ENCODE measurements at regions of chr6 and their contacts with region 1.

Region 1: DNA sequence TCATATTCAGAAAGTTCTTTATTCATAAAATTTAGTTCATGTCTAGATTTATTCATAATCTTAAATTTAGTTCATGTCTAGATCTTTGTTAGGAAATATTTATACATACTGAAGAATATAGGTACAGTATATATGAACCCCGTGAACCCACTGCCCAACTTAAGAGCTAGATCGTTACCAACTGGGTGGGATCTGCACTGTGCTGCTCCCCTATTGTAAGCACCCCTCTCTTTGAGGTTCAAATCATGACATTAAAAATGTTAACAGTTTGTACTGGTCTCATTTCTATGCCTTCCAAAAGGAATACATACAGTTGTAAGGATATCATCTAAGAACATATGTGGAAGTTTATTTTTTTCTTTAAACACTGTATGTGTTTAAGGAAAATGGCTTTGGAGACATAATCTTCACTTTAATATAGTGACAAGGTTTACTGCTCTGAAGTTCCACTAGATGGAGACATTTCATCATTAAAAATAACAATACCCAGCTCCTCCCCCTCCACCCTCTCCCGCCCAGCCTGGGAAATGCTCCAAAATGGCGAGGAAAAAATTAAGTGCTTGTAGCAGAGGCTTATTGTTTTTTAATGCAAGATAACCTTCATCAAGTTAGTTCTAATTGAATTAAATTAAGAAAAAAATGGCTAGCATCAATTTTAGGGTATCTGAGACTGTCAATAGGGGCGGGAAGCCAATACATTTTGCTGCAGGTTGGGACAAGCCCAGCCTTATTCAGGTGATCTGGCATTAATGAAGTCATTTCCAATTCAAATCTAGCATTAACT is 104.1 kb upstream of the TRAF3IP2 start:
- DNase-seq: peak; percentile 33
- ATAC-seq: peak; percentile 97
- H3K4me3 ChIP-seq: no peak overlapping the region
- H3K27ac ChIP-seq: peak overlapping the region; percentile 13; the same call in 1 of the 2 replicates
- H3K4me1 ChIP-seq: peaks cover 5% of the 10 kb centered on the region; the same call in 1 of the 2 replicates
- H3K27me3 ChIP-seq: no peaks in the 10 kb centered on the region
- CTCF ChIP-seq: peak; percentile 45 to 76 (median 62); a peak in 4 of 6 replicates
- EP300 ChIP-seq: no peak
- POLR2A ChIP-seq: no peak
- RAD21 ChIP-seq: peak; percentile 91

Region 2: GRCh38 chr6:111696814-111697213 is 13.0 kb before region 1 on chr6:
- CTCF ChIA-PET with region 1: interaction called, 16 read pairs
- POLR2A ChIA-PET with region 1: no interaction called
- RAD21 ChIA-PET with region 1: interaction called, 5 read pairs
- SMC1A ChIA-PET with region 1: interaction called, 12 read pairs
- in situ Hi-C with region 1: no loop called
- intact Hi-C with region 1: no loop called
- DNase-seq: no peak
- ATAC-seq: no peak
- H3K4me3 ChIP-seq: no peak overlapping the region
- H3K27ac ChIP-seq: no peak overlapping the region
- H3K4me1 ChIP-seq: no peaks in the 10 kb centered on the region
- H3K27me3 ChIP-seq: no peaks in the 10 kb centered on the region
- CTCF ChIP-seq: no peak
- EP300 ChIP-seq: no peak
- POLR2A ChIP-seq: no peak
- RAD21 ChIP-seq: no peak

Region 3: DNA sequence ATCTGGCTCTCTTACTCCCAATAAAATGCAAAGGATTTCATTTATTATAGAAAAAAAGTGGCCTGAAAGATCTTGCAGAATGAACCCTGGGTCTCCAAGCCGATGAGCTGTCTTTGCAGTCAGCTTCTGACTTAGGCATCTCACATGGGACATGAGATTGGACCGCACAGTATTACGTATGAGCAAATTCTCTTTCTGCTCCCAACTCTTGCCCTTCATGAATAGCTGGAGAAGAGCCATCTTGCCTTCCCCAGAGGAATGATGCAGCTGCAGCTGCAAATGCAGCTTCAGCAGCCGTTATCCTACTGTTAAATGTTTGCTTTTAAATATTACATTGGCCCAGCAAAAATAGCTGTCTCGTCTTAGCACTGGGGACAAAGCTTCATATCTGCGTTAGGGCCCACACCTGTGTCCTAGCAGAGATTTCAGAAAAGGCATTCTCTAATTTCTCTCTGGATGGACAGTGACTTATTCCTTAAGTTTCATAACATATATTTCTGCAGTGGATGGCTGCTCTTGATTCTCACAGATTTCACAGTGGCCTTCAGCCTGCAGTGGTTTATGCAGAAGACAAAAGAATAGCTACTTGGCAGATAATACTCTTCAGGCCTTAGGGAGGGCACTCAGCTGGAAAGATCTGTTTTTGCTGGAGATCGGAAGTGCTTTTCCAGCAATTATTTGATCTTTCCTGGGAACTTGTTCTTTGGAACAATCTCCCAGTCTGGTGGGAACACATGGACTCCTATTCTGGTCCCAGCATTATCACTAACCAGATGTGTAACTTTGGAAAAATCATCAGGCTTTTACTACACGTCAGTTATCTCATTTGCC is 34.3 kb after region 1 on chr6:
- CTCF ChIA-PET with region 1: interaction called, 7 read pairs
- POLR2A ChIA-PET with region 1: no interaction called
- RAD21 ChIA-PET with region 1: interaction called, 8 read pairs
- SMC1A ChIA-PET with region 1: interaction called, 11 read pairs
- in situ Hi-C with region 1: no loop called
- intact Hi-C with region 1: no loop called
- DNase-seq: no peak
- ATAC-seq: no peak
- H3K4me3 ChIP-seq: no peak overlapping the region
- H3K27ac ChIP-seq: no peak overlapping the region
- H3K4me1 ChIP-seq: peaks cover 58% of the 10 kb centered on the region
- H3K27me3 ChIP-seq: no peaks in the 10 kb centered on the region
- CTCF ChIP-seq: no peak
- EP300 ChIP-seq: no peak
- POLR2A ChIP-seq: no peak
- RAD21 ChIP-seq: no peak

Region 4: GRCh38 chr6:111777357-111777756 is 67.5 kb after region 1 on chr6:
- CTCF ChIA-PET with region 1: interaction called, 12 read pairs
- POLR2A ChIA-PET with region 1: no interaction called
- RAD21 ChIA-PET with region 1: no interaction called
- SMC1A ChIA-PET with region 1: interaction called, 5 read pairs
- in situ Hi-C with region 1: no loop called
- intact Hi-C with region 1: loop called (anchors 1 kb)
- DNase-seq: no peak
- ATAC-seq: peak; percentile 82
- H3K4me3 ChIP-seq: no peak overlapping the region
- H3K27ac ChIP-seq: peak overlapping the region; percentile 61
- H3K4me1 ChIP-seq: peaks cover 22% of the 10 kb centered on the region
- H3K27me3 ChIP-seq: no peaks in the 10 kb centered on the region
- CTCF ChIP-seq: peak; percentile 39 to 50 (median 43); a peak in 4 of 6 replicates
- EP300 ChIP-seq: no peak
- POLR2A ChIP-seq: no peak
- RAD21 ChIP-seq: peak; percentile 72

Region 5: DNA sequence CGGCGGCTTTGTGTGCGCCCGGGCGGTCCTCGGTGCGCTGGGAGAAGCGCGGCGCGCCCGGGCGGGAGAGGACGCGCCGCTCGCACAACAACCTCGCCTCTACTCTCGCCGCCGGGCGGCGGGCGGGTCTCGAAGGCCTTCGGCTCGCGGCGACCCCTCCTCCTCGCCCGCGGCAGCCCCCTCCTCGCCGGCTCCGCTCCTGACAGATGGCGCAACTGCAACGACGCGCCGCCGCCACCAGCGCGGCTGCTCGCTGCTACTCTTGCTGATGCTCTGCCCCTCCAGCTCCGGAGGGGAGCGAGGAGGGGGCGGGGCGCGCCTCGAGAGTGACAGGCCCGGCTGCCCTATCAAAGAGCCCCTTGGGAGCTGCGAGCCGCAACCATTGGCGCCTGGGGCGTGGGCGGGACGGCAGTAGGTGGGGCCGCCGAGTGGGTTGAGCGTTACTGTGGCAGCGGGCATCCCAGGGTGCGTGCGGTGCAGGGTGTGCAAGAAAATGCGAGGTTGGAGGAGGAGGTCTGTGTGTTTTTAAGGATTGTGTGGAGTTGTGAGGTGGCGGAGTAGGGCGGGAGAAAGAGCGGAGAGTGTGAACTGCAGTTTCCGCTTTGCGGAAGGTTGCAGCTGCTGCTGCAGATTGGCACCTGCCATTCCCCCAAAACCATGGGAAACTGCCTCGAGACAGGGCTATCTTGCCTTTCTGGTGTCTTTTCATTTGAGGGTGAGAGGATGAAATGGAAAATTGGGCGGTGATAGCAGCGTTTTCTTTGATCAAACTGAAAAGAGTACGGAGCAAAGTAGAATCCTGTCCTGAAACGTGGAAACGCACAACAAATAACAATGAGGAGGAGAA is 163.6 kb after region 1 on chr6 and contains the start of gene FYN:
- CTCF ChIA-PET with region 1: interaction called, 4 read pairs
- POLR2A ChIA-PET with region 1: no interaction called
- RAD21 ChIA-PET with region 1: interaction called, 8 read pairs
- SMC1A ChIA-PET with region 1: interaction called, 16 read pairs
- in situ Hi-C with region 1: no loop called
- intact Hi-C with region 1: no loop called
- DNase-seq: peak; percentile 76
- ATAC-seq: peak; percentile 92
- H3K4me3 ChIP-seq: peak within 1 kb of the TSS; percentile 98
- H3K27ac ChIP-seq: peak within 1 kb of the TSS; percentile 76
- H3K4me1 ChIP-seq: peaks cover 5% of the 10 kb centered on the region
- H3K27me3 ChIP-seq: no peaks in the 10 kb centered on the region
- CTCF ChIP-seq: peak; percentile 28 to 65 (median 30); a peak in 5 of 6 replicates
- EP300 ChIP-seq: no peak
- POLR2A ChIP-seq: peak; percentile 95
- RAD21 ChIP-seq: peak; percentile 48
- polyA plus RNA-seq, gene FYN: 51.4 to 55.1 TPM

Region 6: DNA sequence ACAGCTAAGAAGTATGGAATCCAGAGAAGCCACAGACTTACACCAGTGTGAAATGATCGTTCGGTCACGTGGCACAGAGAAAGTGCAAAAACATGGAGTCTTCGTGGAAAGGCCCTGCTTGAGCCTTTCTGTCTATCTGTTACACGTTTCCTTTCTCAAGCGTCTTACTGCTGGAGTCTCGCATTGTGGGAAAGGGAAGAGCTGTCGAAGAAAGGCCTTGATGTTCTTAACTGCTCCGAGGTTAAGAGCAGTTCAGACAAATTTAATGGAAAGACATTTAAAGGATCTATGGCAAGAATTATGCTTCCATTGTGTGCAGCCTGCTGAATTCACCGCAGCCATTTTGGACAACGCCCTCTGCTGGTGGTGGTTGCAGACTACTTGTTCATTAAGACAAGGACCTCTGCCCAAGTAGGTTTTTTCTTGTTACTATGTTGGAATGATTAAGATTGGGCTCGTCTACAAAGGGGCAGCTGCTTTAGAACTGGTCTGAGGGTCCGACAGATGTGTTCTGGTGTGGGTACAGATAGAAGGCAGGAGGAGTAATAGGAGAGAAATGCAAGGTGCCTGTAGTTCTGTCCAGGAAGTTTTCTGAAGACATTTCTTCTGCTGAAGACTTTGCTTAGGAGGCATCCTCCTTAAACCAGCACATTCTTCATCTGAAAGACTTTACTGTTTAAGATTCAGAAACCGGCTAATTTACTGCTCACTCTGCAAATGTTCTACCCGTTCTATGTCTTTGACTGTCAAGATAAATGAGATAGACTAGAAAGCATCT is 319.4 kb after region 1 on chr6:
- CTCF ChIA-PET with region 1: interaction called, 21 read pairs
- POLR2A ChIA-PET with region 1: no interaction called
- RAD21 ChIA-PET with region 1: interaction called, 11 read pairs
- SMC1A ChIA-PET with region 1: interaction called, 21 read pairs
- in situ Hi-C with region 1: loop called (anchors 5 kb)
- intact Hi-C with region 1: loop called (anchors 1 kb)
- DNase-seq: no peak
- ATAC-seq: peak; percentile 87
- H3K4me3 ChIP-seq: no peak overlapping the region
- H3K27ac ChIP-seq: no peak overlapping the region
- H3K4me1 ChIP-seq: peaks cover 8% of the 10 kb centered on the region; the same call in 1 of the 2 replicates
- H3K27me3 ChIP-seq: no peaks in the 10 kb centered on the region
- CTCF ChIP-seq: peak; percentile 58 to 81 (median 79)
- EP300 ChIP-seq: no peak
- POLR2A ChIP-seq: no peak
- RAD21 ChIP-seq: peak; percentile 66

Region 7: DNA sequence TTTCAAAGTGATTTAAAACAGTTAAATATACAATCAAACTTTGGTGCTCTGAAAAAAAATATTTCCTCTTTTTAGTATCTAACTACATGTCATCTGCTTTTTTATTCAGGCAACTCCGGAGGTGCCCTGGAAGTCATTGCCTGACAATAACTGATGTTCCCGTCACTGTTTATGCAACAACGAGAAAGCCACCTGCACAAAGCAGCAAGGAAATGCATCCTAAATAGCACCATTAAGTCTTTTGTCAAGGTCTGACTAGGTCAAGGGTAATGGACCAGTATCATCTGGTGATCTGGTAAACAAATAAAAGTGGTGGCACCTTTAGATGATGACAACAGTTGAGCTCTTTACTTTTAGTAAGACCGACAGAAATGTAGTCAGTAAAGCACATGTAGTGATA is 390.8 kb after region 1 on chr6:
- CTCF ChIA-PET with region 1: no interaction called
- POLR2A ChIA-PET with region 1: no interaction called
- RAD21 ChIA-PET with region 1: no interaction called
- SMC1A ChIA-PET with region 1: no interaction called
- in situ Hi-C with region 1: no loop called
- intact Hi-C with region 1: no loop called
- DNase-seq: no peak
- ATAC-seq: no peak
- H3K4me3 ChIP-seq: no peak overlapping the region
- H3K27ac ChIP-seq: no peak overlapping the region
- H3K4me1 ChIP-seq: no peaks in the 10 kb centered on the region
- H3K27me3 ChIP-seq: no peaks in the 10 kb centered on the region
- CTCF ChIP-seq: no peak
- EP300 ChIP-seq: no peak
- POLR2A ChIP-seq: no peak
- RAD21 ChIP-seq: no peak

Region 8: DNA sequence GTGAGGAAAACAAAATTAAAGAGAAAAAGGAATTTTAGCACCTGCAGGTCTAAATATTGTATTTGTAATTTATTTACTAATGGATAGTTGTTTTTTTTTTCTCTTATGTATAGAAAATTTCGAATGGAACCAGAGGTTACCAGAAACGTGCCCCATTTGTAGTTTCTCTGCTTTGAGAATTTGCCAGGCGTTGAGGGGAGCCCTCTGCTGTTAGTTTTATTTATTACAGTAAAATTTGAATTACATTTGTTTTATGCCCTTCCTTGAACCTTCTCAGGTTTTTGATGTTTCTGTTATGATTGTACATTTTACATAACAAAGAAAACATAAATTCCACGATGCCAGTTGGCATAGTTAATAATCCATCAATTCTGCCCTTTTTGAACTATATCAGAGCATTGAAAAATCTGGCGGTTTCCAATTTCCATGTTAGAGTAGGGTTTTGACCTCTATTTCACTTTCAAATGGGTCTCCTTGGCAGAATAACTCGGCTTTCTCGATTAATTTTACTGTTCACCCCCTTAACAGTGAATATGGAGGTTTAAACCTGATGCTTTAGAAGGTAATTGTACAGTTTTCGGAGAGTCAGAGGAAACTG is 602.2 kb after region 1 on chr6:
- CTCF ChIA-PET with region 1: no interaction called
- POLR2A ChIA-PET with region 1: no interaction called
- RAD21 ChIA-PET with region 1: no interaction called
- SMC1A ChIA-PET with region 1: no interaction called
- in situ Hi-C with region 1: loop called (anchors 25 kb)
- intact Hi-C with region 1: no loop called
- DNase-seq: no peak
- ATAC-seq: 0 out of 3 replicates have a peak, but pooled peaks have one; percentile 27
- H3K4me3 ChIP-seq: no peak overlapping the region
- H3K27ac ChIP-seq: no peak overlapping the region
- H3K4me1 ChIP-seq: peaks cover 6% of the 10 kb centered on the region
- H3K27me3 ChIP-seq: no peaks in the 10 kb centered on the region
- CTCF ChIP-seq: peak; percentile 54 to 69 (median 59)
- EP300 ChIP-seq: no peak
- POLR2A ChIP-seq: no peak
- RAD21 ChIP-seq: peak; percentile 84

Measured in GM12878 (cell line).